ENCODE measurements at regions of chr5 and their contacts with region 1.

Region 1: GRCh38 chr5:133278317-133278716 is 226.5 kb downstream of the HSPA4 start:
- DNase-seq: no peak
- H3K4me3 Mint-ChIP-seq: no peak overlapping the region
- H3K27ac Mint-ChIP-seq: no peak overlapping the region
- H3K4me1 Mint-ChIP-seq: no peaks in the 10 kb centered on the region
- H3K27me3 Mint-ChIP-seq: no peaks in the 10 kb centered on the region

Region 2: GRCh38 chr5:133199417-133200178 is 78.7 kb before region 1 on chr5:
- CTCF ChIA-PET with region 1: no interaction called
- POLR2A ChIA-PET with region 1: no interaction called
- intact Hi-C with region 1: no loop called
- DNase-seq: no peak
- H3K4me3 Mint-ChIP-seq: no peak overlapping the region
- H3K27ac Mint-ChIP-seq: no peak overlapping the region
- H3K4me1 Mint-ChIP-seq: no peaks in the 10 kb centered on the region
- H3K27me3 Mint-ChIP-seq: no peaks in the 10 kb centered on the region

Region 3: GRCh38 chr5:133260715-133261114 is 17.6 kb before region 1 on chr5:
- CTCF ChIA-PET with region 1: no interaction called
- POLR2A ChIA-PET with region 1: no interaction called
- intact Hi-C with region 1: loop called (anchors 1 kb)
- DNase-seq: no peak
- H3K4me3 Mint-ChIP-seq: no peak overlapping the region
- H3K27ac Mint-ChIP-seq: no peak overlapping the region
- H3K4me1 Mint-ChIP-seq: peaks cover 14% of the 10 kb centered on the region
- H3K27me3 Mint-ChIP-seq: peaks cover 6% of the 10 kb centered on the region

Region 4: DNA sequence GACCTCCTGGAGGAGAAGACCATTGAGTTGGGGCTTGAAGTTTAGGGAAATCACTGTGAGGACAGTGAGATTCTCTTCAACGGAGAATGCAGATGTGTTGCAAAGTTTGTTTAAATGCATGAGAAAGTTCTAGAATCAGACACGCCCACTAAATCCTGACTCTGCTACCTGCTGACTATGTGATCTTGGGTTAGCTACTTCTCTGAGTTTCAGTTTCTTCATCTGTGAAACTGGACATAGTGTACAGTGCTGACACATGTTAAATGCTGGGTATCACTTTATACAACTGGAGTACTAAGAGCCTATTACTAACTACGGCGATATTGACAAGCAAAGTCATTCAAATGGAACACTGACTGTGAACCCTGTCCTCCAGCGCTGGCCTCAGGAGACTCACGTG is 29.0 kb after region 1 on chr5:
- CTCF ChIA-PET with region 1: no interaction called
- POLR2A ChIA-PET with region 1: no interaction called
- intact Hi-C with region 1: no loop called
- DNase-seq: no peak
- H3K4me3 Mint-ChIP-seq: no peak overlapping the region
- H3K27ac Mint-ChIP-seq: no peak overlapping the region
- H3K4me1 Mint-ChIP-seq: no peaks in the 10 kb centered on the region
- H3K27me3 Mint-ChIP-seq: peaks cover 3% of the 10 kb centered on the region